ENCODE measurements at regions of chr13 and their contacts with region 1.

Region 1: DNA sequence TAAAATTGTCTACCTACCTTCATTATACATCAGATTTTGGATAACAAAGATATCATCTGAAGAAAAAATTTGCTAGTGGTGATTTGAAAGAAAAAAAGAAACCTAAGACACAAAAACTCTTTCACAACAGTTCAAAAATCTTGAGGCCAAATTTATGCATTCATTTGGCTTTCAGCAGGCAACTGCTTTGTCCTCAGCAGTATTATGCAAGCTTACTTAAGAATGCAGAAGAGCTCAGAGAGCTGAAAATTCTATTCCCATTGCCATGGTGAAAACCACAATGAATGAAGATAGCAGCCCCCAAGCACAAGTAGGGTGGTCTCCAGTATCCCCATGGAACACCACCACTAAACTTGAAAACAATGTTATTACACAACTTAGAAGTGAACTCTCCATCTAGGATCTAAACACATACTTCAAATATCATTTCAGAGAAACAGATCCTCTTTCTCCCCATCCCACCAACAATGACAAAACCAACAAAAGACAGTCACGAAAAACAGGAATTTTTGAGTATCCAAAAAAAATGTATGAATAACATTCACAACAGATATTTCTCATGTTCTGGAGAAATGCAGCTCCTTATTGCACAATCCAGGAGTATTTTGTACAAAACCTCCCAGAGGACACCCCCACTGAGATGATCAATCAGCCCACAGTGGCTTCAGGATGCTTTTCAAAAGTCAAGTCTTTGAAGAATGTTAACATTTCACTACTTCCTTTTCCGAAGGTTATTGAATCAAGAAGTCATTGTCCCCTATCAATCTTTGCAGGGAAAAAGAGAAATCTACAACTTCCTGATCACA is 192.7 kb downstream of the LHFPL6 start:
- DNase-seq: no peak
- ATAC-seq: peak; percentile 50

Region 2: GRCh38 chr13:39602614-39603366 is 192.5 kb after region 1 on chr13 and contains the start of gene LHFPL6:
- intact Hi-C with region 1: loop called (anchors 5 kb)
- DNase-seq: peak; percentile 92
- ATAC-seq: peak; percentile 96
- total RNA-seq, gene LHFPL6: 53.0 TPM

Measured in Right ventricle myocardium superior (tissue), 1 donor.